HepG2 (cell line): ENCODE measurements at regions of chr4 and their contacts with region 1.

Region 1: DNA sequence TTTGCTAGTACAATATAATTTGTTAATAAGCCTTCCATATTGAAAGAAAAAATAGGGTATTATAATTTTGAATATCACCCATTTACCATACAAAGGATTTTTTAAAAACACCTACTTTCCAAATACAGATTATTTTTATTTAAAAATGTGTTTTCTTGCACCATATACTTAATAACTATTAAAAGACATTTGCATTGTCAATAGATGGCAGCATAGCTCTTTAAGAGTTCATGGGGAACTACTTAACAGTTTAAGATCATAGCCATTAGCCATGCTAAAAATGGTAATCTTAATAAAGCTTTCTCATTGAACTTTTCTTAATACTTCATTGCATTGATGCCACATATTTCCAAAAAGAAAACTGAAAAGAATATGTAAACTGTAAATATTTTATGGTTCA is 1995.9 kb downstream of the C4orf33 start:
- DNase-seq: peak; percentile 19
- ATAC-seq: 0 out of 3 replicates have a peak, but pooled peaks have one; percentile 49
- H3K4me3 ChIP-seq: no peak overlapping the region
- H3K27ac ChIP-seq: no peak overlapping the region
- H3K4me1 ChIP-seq: no peaks in the 10 kb centered on the region
- H3K27me3 ChIP-seq: no peaks in the 10 kb centered on the region
- CTCF ChIP-seq: peak; percentile 35; the same call in 1 of the 2 replicates
- EP300 ChIP-seq: no peak
- POLR2A ChIP-seq: no peak
- RAD21 ChIP-seq: no peak

Region 2: DNA sequence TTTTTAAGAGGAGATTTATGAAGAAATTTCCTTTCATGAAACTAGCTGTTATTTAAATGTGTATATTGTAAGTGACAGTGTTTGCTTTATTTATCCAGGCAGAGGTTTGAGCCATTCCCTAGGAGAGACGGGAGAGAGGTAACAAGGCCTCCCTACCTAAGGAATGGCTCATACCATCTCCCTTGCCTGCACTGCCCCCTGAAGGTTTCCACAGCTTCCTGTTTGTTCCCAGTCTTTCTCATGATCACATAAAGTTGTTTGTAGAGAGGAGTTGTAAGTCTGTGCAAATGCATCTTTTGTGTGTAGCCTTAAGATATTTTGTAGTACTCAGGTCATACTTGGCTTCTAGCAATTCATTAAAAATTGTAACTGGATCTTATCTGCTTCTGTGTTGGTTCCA is 552.7 kb after region 1 on chr4:
- CTCF ChIA-PET with region 1: no interaction called
- POLR2A ChIA-PET with region 1: no interaction called
- in situ Hi-C with region 1: no loop called
- intact Hi-C with region 1: loop called (anchors 10 kb)
- DNase-seq: peak; percentile 3
- ATAC-seq: peak; percentile 70
- H3K4me3 ChIP-seq: no peak overlapping the region
- H3K27ac ChIP-seq: no peak overlapping the region
- H3K4me1 ChIP-seq: no peaks in the 10 kb centered on the region
- H3K27me3 ChIP-seq: no peaks in the 10 kb centered on the region
- CTCF ChIP-seq: peak; percentile 45; the same call in 1 of the 2 replicates
- EP300 ChIP-seq: no peak
- POLR2A ChIP-seq: no peak
- RAD21 ChIP-seq: no peak

Region 3: DNA sequence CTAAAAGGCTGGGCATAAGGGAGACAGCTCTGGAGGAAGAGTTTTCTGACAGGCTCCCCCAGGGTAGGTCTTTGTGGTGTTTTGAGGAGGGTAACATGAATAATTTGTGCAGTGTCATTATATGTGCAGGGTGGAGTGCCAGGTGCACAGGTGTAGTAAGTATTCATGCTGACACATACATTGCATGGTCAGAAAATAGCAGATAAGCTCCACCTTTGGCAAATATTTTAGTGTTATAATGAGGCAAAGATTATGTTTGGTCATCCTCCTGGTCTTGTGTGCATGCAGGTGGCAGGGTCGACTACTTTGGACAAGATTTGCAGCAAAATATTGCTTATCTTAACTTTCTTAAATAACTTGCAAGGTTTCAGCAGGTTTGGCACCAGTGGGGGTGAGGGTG is 1146.8 kb after region 1 on chr4:
- CTCF ChIA-PET with region 1: no interaction called
- POLR2A ChIA-PET with region 1: no interaction called
- in situ Hi-C with region 1: loop called (anchors 10 kb)
- intact Hi-C with region 1: no loop called
- DNase-seq: no peak
- ATAC-seq: no peak
- H3K4me3 ChIP-seq: no peak overlapping the region
- H3K27ac ChIP-seq: no peak overlapping the region
- H3K4me1 ChIP-seq: no peaks in the 10 kb centered on the region
- H3K27me3 ChIP-seq: no peaks in the 10 kb centered on the region
- CTCF ChIP-seq: no peak
- EP300 ChIP-seq: no peak
- POLR2A ChIP-seq: no peak
- RAD21 ChIP-seq: no peak

Region 4: GRCh38 chr4:132642016-132642817 is 1550.3 kb after region 1 on chr4:
- CTCF ChIA-PET with region 1: no interaction called
- POLR2A ChIA-PET with region 1: no interaction called
- in situ Hi-C with region 1: loop called (anchors 25 kb)
- intact Hi-C with region 1: loop called (anchors 10 kb)
- DNase-seq: peak; percentile 20
- ATAC-seq: peak; percentile 69
- H3K4me3 ChIP-seq: no peak overlapping the region
- H3K27ac ChIP-seq: no peak overlapping the region
- H3K4me1 ChIP-seq: no peaks in the 10 kb centered on the region
- H3K27me3 ChIP-seq: no peaks in the 10 kb centered on the region
- CTCF ChIP-seq: peak; percentile 72
- EP300 ChIP-seq: no peak
- POLR2A ChIP-seq: no peak
- RAD21 ChIP-seq: no peak